Posterior cingulate gyrus (tissue), 11 donors: ENCODE measurements at regions of chr1 and their contacts with region 1.

Region 1: DNA sequence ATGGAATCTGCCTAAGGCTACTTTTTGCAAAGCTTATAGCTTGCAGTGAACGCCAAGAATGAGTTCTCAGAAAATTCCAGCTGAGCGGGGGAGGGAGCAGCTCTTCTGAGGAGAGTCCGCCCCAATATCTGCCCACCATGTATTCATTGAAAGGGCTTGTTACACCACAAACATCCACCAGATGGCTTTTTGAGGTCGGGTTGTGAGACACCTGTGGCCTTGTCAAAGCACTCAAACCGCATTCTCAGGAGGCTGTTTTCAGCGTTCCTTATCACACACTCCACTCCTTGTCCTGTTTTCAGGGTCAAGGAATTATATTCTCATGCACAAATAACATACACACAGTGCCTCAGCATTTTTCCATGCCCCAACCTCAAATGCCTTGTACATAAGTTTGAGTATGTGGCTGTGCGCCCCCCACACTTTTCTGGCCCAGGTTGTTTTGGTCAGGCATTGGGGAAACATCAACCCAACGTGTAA is 3.9 kb upstream of the C4BPB start:
- DNase-seq: peak in 3 of 10 donors; percentile 21 to 39 (median 28)

Region 2: DNA sequence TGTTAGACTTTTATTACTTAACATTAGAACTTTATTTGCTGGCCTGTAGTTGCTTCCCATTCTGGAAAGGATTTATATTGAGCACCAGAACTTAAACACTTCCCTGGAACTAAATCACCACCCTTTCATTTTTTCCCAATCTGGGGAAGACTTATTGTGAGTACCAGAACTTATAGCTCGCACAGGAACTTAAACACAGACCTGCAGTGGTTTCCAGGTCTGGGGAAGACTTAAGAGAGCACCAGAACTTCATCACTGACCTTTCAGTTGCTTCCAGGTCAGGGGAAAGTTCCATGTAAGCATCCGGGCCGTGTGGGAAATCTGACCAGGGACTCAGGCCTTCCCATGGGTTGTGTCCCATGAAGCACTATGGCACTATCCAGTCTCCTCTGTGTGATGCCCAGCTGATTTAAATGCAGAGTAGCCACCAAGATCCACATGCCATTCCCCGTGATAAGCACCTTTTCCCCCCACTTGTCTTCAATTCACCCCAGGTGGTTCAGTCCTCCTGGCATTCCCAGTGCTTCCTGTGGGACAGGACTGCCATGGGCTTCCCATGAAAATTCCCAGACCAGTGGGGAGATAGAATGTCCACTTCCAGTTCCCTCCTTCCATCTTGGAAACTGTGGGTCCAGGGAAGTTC is 68.2 kb after region 1 on chr1:
- intact Hi-C with region 1: no loop called
- DNase-seq: no peak

Region 3: DNA sequence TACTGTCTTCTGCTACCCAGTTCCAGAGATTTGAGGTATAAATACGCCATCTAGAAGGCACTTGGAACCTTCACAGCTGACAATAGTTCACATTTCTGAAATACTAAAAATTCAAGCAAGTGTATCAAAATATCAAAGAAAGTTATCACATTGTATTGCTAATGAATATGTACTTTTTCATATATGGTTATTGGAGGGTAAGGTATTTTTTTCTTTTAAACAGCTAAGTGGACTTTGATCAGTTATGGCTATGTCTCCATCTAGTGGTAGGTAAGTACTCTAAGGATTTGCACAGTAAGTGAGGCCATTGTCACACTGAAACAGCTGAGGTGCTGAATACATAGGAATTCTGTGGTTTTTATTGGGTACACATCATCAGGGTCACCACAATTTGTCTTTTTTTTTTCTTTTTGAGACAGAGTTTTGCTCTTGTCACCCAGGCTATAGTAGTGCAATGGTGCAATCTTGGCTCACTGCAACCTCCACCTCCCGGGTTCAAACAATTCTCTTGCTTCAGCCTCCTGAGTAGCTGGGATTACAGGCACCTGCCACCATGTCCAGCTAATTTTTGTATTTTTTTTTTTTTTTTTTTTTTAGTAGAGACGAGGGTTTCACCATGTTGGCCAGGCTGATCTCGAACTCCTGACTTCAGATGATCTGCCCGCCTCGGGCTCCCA is 320.2 kb after region 1 on chr1:
- intact Hi-C with region 1: loop called (anchors 2 kb)
- DNase-seq: peak in 1 of 10 donors; percentile 68

Region 4: DNA sequence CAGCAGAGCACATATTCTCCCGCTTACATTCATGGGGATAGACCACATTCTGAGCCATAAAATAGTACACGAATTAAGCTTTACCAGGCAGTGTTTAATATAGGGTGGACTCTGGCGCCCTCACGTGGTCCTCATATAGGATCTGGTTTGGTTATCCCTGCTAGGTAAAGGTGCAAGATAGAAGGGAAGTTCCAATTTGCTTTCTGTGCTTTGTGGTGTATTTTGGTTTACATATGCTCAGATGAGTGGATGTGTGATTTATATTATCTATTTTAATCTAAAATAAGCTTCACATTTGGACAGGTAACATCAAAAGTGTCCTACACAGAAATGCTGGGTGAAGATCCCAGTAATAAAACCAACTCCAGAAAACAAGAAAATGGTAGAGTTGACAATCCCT is 414.8 kb after region 1 on chr1:
- intact Hi-C with region 1: loop called (anchors 2 kb)
- DNase-seq: peak; percentile 39 to 96 (median 72)